AG04449 (cell line): ENCODE measurements at regions of chr11 and their contacts with region 1.

Region 1: GRCh38 chr11:70467201-70468085 is 69.1 kb downstream of the CTTN start:
- DNase-seq: no peak
- H3K4me3 ChIP-seq: no peak overlapping the region
- CTCF ChIP-seq: peak; percentile 78

Region 2: DNA sequence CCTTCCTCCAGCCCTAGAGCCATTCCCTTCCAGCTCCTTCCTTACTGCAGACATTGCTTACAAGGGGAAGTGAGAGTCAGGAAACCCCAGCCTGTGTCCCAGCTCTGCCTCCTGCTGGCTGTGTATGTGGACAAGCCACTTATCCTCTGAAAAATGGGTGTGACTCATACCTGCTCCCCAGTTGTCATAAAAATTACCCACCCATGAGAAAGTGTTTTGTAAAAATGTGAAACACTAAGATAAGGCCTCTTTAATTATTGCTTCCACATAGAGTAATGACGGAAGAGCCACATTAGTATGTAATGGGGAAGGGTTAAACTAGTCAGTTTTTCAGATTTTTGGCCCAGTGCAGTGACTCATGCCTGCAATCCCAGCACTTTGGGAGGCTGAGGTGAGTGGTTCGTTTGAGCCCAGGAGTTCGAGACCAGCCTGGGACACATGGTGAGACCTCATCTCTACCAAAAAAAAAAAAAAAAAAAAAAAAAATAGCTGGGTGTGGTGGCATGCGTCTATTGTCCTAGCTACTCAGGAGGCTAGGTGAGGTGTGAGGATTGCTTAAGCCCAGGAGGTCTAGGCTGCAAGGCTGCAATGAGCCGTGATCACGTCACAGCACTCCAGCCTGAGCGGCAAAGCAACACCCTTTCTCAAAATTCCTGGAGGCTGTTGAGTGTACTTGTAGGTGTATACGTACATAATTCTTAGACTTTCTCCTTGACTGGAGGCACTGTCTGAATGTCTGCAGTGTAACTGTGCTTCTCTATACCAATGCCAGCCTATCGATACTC is 15.8 kb after region 1 on chr11:
- CTCF ChIA-PET with region 1: interaction called, 17 read pairs
- POLR2A ChIA-PET with region 1: no interaction called
- DNase-seq: no peak
- H3K4me3 ChIP-seq: no peak overlapping the region
- CTCF ChIP-seq: no peak

Region 3: DNA sequence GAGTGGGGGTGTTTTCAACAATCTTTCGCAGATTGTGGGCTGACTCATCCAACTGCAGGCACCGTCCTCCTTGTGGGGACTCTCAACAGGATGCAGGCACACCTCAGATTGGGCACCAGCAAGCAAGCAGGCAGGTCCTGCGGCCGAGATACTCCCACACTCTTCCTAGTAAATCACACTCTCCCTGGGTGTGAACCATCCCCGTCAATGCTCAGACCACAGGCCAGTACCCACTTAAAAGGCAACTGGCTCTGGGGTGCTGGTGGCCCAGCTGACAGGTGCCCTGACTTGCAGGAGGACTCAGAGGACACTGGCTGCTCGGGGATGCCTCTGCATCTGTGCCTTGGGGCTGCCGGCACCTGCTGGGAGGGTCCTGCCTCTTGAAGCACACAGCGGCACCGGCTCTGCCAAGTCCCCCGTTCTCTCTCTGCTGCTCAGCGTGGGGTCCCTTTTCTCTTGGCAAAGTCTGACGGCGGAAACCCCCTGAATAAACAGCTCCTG is 213.4 kb after region 1 on chr11:
- CTCF ChIA-PET with region 1: no interaction called
- POLR2A ChIA-PET with region 1: no interaction called
- DNase-seq: no peak
- H3K4me3 ChIP-seq: no peak overlapping the region
- CTCF ChIP-seq: no peak

Region 4: DNA sequence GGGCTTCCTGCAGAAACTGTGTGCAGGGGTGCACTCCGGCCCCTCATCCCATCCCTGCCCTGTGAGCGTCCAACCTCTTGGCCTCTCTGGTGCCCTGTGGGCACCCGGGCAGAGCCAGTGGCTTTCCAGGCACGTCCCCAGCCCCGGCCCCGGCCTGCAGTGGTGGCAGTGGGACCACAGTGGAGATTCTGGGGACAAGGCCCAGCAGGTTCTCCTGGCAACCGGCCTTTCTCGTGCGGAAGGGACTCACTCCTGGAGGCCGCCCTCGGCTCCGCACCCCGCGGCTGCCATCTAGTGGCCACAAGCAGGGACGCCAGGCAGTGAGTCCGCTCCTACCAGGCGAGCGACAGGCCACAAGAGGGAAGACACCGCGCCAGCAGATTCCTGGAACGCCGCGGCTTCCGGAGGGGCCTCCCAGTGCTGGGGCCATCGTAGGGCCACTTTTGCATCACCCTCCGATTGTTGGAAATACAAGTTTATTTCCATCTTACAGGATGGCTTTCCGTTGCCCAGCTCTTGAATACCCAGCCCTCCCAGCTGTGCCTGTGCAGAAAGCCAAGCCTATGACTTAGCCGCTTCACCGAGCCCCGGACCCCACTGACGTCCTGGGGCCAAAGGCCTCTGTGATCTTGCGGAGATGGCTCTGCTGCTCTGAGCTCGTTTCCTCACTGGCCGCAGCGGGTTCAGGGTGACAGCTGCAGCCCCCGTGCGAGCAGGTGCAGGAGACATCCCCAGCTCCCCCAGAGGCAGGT is 288.1 kb after region 1 on chr11:
- CTCF ChIA-PET with region 1: interaction called, 35 read pairs
- POLR2A ChIA-PET with region 1: no interaction called
- DNase-seq: no peak
- H3K4me3 ChIP-seq: no peak overlapping the region
- CTCF ChIP-seq: peak; percentile 99